ENCODE measurements at regions of chr17 and their contacts with region 1.

Region 1: DNA sequence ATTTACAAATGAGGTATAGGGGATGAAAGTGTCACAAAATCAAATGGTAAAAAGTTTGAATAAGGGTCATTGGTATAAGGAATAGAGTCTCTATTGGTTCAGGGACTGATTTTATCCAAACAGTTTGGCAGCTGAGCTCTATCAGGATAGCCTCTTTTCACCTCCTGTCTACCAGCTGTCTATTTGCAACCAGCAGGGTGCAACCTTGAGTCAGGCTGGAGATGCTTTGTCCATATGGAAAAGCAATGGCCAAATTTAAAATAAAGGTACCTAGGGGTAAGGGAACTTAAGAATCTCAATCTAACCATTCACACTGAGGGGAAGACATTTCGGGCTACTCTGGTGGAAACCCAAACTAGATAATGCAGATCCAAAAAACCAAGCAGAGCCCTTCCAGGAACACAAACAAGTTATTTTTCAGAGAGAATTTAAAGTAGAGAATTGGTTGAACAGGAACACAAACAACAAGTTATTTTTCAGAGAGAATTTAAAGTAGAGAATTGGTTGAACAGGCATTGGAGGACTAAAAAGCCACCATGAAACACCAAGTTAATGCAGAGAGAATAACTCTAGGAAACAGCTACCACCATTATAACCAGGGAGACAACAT is 12.6 kb upstream of the CA10 start:
- DNase-seq: no peak
- H3K4me3 ChIP-seq: no peak overlapping the region
- H3K27ac ChIP-seq: no peak overlapping the region
- H3K4me1 ChIP-seq: no peaks in the 10 kb centered on the region
- H3K27me3 ChIP-seq: no peaks in the 10 kb centered on the region
- CTCF ChIP-seq: peak; percentile 16 to 72 (median 66)
- EP300 ChIP-seq: no peak
- POLR2A ChIP-seq: no peak
- RAD21 ChIP-seq: peak; percentile 76 to 79

Region 2: GRCh38 chr17:52158450-52159042 is 12.5 kb before region 1 on chr17 and contains the start of gene CA10:
- CTCF ChIA-PET with region 1: interaction called, 17 read pairs
- POLR2A ChIA-PET with region 1: no interaction called
- DNase-seq: peak; percentile 51 to 81
- H3K4me3 ChIP-seq: peak within 1 kb of the TSS; percentile 60 to 75 (median 65)
- H3K27ac ChIP-seq: no peak within 1 kb of the TSS
- H3K4me1 ChIP-seq: peaks cover 0 to 6% (median 2%) of the 10 kb centered on the region in 4 experiments; a peak in 4 of 7 replicates
- H3K27me3 ChIP-seq: peaks cover 34 to 50% (median 42%) of the 10 kb centered on the region in 4 experiments
- CTCF ChIP-seq: peak; percentile 53 to 67 (median 53)
- EP300 ChIP-seq: no peak
- POLR2A ChIP-seq: no peak
- RAD21 ChIP-seq: peak; percentile 68 to 75
- total RNA-seq, gene CA10: 0.63 and 0.96 TPM in 2 replicates

Region 3: DNA sequence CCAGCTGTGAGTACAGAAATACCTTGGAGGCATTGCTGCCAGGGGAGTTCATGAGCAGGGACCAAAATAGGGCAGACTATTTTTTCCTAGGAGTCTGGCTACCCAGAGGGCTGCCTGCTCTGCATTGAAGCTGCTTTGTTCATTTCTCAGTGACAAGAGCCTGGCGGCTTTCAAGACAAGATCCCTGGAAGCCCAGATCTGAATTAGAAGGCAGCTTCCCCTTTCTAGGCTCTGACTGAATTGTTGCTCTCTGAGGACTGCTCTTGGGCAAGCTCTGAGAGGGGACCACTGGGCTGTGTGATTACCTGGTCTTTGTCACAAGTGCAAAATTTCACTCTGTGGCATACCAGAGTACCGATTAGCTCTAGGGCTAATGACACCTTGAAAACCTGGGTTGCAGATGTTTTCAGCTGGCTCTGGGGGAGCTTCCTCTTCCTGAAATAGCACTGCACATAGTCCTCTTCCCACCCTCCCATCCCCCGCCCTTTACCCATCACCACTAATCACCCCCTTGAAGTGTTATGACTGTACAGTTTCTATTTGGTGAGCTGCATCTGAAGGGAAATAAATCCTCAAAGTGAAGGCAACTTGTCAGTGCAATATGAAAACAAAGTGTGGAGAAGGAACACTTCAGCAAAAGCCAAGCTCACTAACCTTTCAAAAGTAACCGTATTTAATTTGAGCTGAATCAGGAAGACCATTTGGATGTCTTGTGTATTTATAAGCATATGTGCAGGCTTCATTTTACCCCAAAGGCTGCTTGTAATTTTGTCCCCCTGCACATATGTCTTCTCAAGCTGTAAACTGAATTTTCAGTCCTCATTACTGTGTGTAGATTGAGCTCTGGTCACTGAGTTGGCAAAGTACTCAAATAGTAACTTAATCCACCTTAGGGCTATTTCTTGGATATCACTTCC is 31.4 kb after region 1 on chr17:
- CTCF ChIA-PET with region 1: interaction called, 10 read pairs
- POLR2A ChIA-PET with region 1: no interaction called
- DNase-seq: no peak
- H3K4me3 ChIP-seq: no peak overlapping the region
- H3K27ac ChIP-seq: no peak overlapping the region
- H3K4me1 ChIP-seq: no peaks in the 10 kb centered on the region
- H3K27me3 ChIP-seq: no peaks in the 10 kb centered on the region
- CTCF ChIP-seq: no peak
- EP300 ChIP-seq: no peak
- POLR2A ChIP-seq: no peak
- RAD21 ChIP-seq: no peak